Psoas muscle (tissue), 8 donors: ENCODE measurements at regions of chr2 and their contacts with region 1.

Region 1: DNA sequence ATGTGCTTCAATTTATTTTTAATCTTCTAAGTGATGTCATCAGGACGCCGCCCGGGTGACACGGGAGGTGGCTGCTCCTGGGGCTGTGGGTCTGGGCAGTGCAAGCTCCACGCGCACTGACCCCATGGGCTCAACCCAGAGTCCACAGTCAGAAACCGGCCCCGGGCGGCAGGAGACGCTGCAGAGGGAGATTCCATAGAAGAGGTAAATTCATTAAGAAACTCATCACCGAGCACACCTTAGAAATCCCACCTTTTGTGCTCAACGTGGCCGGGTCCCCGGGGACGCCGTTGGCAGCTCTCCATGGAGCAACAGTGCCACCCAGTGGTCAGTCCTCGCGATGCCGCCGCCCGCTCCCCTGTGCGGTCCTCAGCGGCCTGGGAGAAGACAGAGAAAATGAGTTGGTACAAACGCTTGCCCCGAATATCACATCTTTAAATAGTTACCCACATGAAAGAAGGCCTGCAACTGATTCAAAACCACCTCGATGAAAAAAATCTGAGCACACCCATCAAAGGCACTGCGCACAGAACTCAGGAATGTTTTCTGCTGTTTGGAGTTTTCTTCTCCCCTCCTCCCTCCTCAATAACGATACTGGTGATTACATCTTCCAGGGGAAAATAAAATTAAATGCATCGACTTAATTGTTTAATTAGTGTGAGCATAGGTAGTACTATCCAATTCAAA is 92.6 kb downstream of the CMPK2 start:
- DNase-seq: peak; percentile 36 to 69
- ATAC-seq: peak; percentile 81 to 91 (median 86)
- H3K4me3 ChIP-seq: no peak overlapping the region
- H3K27ac ChIP-seq: no peak overlapping the region
- H3K4me1 ChIP-seq: no peaks in the 10 kb centered on the region
- H3K27me3 ChIP-seq: no peaks in the 10 kb centered on the region
- CTCF ChIP-seq: peak; percentile 97

Region 2: DNA sequence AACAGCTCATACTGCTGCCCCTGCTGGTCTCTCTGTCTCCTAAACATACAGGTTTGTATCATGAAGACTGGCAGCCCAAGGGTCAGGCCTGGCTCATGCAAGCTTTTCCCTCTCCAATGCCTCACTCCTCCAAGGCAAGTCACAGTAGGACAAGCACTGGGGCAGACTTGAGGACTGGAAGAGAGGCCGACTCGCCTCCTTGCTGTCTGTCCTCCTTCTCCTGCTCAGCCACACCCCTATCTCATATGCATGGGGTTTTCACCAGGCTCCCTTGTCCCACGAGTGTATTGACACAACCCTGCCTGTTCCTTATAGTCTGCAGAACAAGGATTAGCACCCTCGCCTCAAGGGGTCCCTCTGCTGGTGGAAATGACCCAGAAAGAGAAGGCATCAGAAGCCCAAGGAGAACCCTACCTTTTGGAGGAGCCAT is 857.3 kb before region 1 on chr2:
- intact Hi-C with region 1: loop called in 1 of 2 experiments (anchors 10 kb)
- DNase-seq: no peak
- ATAC-seq: peak in 3 of 4 donors; percentile 40 to 68 (median 41)
- H3K4me3 ChIP-seq: no peak overlapping the region
- H3K27ac ChIP-seq: peak overlapping the region; percentile 53
- H3K4me1 ChIP-seq: peaks cover 13% of the 10 kb centered on the region
- H3K27me3 ChIP-seq: no peaks in the 10 kb centered on the region
- CTCF ChIP-seq: peak; percentile 39

Region 3: DNA sequence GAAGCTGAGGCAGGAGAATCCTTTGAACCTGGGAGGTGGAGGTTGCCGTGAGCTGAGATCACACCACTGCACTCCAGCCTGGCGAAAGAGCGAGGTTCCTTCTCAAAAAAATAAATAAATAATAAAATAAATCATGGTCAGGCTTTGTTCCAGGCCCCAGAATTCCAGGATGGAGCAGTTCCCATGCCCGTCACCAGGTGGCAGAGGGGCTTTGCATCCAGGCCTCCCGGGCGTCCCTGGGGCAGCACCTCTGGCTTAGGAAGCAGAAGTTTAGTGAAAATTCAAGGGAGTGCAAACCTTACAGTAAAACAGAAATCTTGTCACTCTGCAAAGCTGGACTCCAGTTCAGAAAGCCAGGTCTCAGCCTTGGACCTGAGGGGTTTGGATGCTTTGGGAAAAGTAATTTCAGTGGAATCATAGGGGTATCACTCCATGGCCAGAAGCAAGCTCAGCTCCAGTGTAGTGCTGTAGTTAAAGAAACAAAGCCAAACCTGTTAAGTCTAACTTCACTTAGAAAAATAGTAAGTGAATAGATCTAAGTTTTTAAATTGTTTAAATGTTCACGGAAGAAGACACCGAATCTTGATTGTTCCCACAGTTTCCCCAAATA is 420.1 kb before region 1 on chr2:
- intact Hi-C with region 1: loop called (anchors 2 to 5 kb)
- DNase-seq: peak; percentile 17 to 56
- ATAC-seq: peak in 2 of 4 donors; percentile 57 to 67
- H3K4me3 ChIP-seq: no peak overlapping the region
- H3K27ac ChIP-seq: no peak overlapping the region
- H3K4me1 ChIP-seq: no peaks in the 10 kb centered on the region
- H3K27me3 ChIP-seq: no peaks in the 10 kb centered on the region
- CTCF ChIP-seq: peak; percentile 66

Region 4: DNA sequence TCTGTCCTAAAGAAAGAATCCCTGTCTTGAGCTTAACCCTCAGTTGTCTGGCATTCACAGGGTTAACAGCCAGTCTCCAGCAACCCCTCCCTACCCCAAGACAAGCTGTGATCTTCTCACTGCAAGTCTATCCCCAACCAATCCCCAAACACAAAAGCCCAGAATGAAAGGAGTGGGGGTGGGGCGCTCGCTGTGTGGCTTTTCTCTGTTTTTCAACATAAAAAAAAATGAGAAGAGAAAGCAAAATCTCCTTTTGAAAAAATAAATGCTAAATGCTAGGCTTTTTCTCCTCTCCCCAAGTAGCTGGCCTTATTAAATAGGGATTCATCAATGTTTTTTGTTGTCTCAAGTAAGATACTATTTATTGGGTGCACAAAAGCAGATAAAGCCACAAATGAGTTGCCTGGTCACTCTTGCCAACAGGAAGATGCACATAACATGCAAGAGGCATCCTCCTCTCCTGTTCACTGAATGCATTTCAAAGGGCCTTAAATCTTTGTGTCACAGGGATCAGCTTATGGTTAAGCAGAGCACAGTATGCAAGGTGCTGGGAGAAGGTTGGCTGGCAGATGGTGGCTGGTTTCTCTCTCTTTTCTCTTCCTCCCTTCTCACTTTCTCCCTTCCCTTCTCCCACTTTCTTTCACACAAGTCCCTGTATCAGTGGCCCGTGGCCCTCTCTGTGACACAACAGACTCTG is 133.1 kb before region 1 on chr2:
- intact Hi-C with region 1: no loop called
- DNase-seq: no peak
- ATAC-seq: no peak
- H3K4me3 ChIP-seq: no peak overlapping the region
- H3K27ac ChIP-seq: no peak overlapping the region
- H3K4me1 ChIP-seq: no peaks in the 10 kb centered on the region
- H3K27me3 ChIP-seq: peaks cover 0 to 2% (median 0%) of the 10 kb centered on the region in 3 donors
- CTCF ChIP-seq: no peak